Aorta (tissue), 5 donors: ENCODE measurements at regions of chr12 and their contacts with region 1.

Region 1: GRCh38 chr12:116434155-116435011 is 124.8 kb upstream of the MAP1LC3B2 start:
- DNase-seq: peak; percentile 94 to 95
- ATAC-seq: peak; percentile 96
- H3K4me3 ChIP-seq: no peak overlapping the region
- H3K27ac ChIP-seq: peak overlapping the region in 1 of 2 donors; percentile 97
- H3K4me1 ChIP-seq: no peaks in the 10 kb centered on the region
- H3K27me3 ChIP-seq: no peaks in the 10 kb centered on the region

Region 2: GRCh38 chr12:116319898-116320621 is 114.3 kb before region 1 on chr12:
- intact Hi-C with region 1: loop called in 1 of 2 experiments (anchors 5 kb)
- DNase-seq: peak in 1 of 2 donors; percentile 86
- ATAC-seq: peak; percentile 93
- H3K4me3 ChIP-seq: no peak overlapping the region
- H3K27ac ChIP-seq: peak overlapping the region; percentile 91 to 98
- H3K4me1 ChIP-seq: peaks cover 0 to 7% of the 10 kb centered on the region in 2 donors
- H3K27me3 ChIP-seq: no peaks in the 10 kb centered on the region

Region 3: GRCh38 chr12:116382686-116383531 is 51.5 kb before region 1 on chr12:
- intact Hi-C with region 1: loop called (anchors 5 kb)
- DNase-seq: peak; percentile 88 to 89
- ATAC-seq: peak; percentile 90
- H3K4me3 ChIP-seq: no peak overlapping the region
- H3K27ac ChIP-seq: peak overlapping the region in 1 of 2 donors; percentile 6
- H3K4me1 ChIP-seq: no peaks in the 10 kb centered on the region
- H3K27me3 ChIP-seq: no peaks in the 10 kb centered on the region

Region 4: GRCh38 chr12:116525418-116526001 is 91.1 kb after region 1 on chr12:
- intact Hi-C with region 1: loop called (anchors 2 to 5 kb)
- DNase-seq: peak; percentile 90 to 91
- ATAC-seq: peak; percentile 94
- H3K4me3 ChIP-seq: no peak overlapping the region
- H3K27ac ChIP-seq: peak overlapping the region; percentile 72 to 90
- H3K4me1 ChIP-seq: peaks cover 2 to 12% of the 10 kb centered on the region in 2 donors
- H3K27me3 ChIP-seq: no peaks in the 10 kb centered on the region